Activated T-helper 2 cell treated with anti-CD3 and anti-CD28 coated beads, Interferon-gamma antibody, Interleukin-2, Interleukin-4, amounts not matched to agents 10 μg/mL and 5 μg/mL and 100 μg/mL, durations not matched to agents 14 hours and 24 hours and 36 hours (primary cell): ENCODE measurements at regions of chr13 and their contacts with region 1.

Region 1: DNA sequence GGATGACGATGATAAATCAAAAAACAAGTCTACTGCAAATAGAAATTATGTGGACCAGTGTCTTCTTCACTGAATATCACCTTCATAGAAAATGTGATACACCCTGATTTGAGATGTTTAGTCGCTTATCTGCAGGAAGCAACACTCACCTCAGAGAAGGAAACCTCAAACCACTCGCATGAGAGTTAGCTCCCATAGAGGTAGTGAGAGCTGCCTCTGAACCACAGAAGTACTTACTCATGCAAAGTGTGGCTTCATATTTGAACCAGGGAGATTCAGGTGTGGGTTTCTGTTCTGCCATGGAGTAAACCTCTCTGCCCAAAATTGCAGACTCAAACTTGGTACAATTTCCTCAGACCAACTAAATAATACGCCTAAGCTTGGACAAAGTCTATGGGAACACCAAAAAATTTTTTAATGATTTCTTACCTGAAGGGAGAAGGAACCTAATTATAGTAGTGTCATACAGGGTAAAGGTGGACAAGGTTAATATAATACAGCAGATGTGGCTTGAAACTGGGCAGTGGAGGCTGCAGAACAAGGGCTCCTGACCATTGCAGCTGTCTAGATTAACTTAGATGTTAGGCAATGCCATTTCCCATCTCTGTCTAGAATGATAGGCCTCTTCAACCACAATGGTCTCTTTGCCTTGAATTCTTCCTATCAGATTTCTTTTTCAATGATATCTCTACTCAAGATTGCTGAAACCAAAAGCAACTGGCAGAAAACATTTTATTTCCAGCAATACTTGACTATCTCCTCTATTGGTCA is 29.6 kb upstream of the RCBTB2 start:
- DNase-seq: peak; percentile 78
- H3K4me3 Mint-ChIP-seq: peak overlapping the region; percentile 46
- H3K27ac Mint-ChIP-seq: peak overlapping the region; percentile 36
- H3K4me1 Mint-ChIP-seq: peaks cover 57% of the 10 kb centered on the region
- H3K27me3 Mint-ChIP-seq: peaks cover 46% of the 10 kb centered on the region

Region 2: GRCh38 chr13:48346583-48346982 is 215.9 kb before region 1 on chr13:
- intact Hi-C with region 1: loop called (anchors 2 kb)
- DNase-seq: no peak
- H3K4me3 Mint-ChIP-seq: no peak overlapping the region
- H3K27ac Mint-ChIP-seq: no peak overlapping the region
- H3K4me1 Mint-ChIP-seq: peaks cover 11% of the 10 kb centered on the region
- H3K27me3 Mint-ChIP-seq: no peaks in the 10 kb centered on the region

Region 3: DNA sequence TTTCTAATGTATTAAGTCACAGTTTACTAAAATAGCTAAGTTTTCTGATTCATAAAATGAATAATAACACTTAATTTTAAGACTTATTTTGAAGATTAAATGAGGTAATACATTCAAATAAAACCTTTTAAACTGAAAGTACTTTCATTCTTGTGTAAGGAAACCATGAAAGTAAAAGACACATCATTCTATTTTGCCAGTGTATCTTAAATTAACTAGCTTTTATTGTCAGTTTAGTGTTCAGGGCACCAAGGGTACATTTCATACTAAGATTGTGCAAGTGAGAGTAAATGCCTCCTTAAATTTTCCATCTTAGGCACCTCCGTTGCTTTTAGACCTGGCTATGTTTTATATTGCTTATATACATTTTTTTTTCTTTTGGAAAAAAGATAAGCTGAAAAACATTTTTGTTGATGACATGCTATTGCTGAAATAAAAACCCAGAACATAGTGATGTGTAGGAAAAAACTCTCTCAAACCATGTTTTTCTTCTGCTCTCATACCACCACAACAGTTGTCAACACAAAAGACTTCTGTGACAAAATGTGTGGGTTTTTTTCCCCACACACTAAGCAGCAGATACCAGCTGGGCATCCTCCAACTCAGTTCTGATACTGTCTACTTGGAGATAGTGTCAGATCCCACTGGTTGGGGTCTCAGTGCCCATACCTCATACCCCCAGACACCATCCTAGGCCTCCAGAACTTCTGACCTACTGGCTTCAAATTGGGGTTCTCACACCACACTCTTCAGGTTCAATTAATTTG is 118.9 kb before region 1 on chr13:
- intact Hi-C with region 1: loop called (anchors 1 kb)
- DNase-seq: no peak
- H3K4me3 Mint-ChIP-seq: no peak overlapping the region
- H3K27ac Mint-ChIP-seq: peak overlapping the region; percentile 29
- H3K4me1 Mint-ChIP-seq: peaks cover 17% of the 10 kb centered on the region
- H3K27me3 Mint-ChIP-seq: no peaks in the 10 kb centered on the region

Region 4: DNA sequence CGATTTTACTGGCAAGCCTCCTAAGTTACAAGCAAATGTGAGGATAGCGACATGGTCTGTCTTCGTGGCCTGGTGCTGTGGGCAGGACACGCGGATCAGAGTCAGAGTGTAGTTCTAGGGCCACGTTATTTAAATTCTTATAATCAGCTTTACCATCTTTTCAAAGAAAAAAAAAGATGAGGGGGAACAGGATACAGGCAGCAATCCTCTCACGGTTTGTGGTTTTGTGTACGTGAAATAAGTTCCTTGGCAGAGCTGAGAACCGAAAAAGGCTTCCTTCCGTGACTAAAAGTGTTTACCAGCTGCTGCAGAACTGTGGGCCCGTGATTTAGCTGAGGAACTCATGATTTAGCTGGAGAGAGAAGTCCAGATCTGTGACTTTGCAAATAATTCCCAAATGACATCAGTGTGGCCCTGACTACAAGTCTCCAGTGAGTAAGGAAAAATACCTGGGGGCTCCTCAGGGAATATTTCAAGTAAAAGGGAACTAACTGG is 56.8 kb before region 1 on chr13:
- intact Hi-C with region 1: loop called (anchors 1 kb)
- DNase-seq: peak; percentile 64
- H3K4me3 Mint-ChIP-seq: peak overlapping the region; percentile 30
- H3K27ac Mint-ChIP-seq: peak overlapping the region; percentile 73
- H3K4me1 Mint-ChIP-seq: peaks cover 75% of the 10 kb centered on the region
- H3K27me3 Mint-ChIP-seq: peaks cover 4% of the 10 kb centered on the region

Region 5: GRCh38 chr13:48532506-48533499 is 29.7 kb before region 1 on chr13 and contains the start of gene RCBTB2:
- intact Hi-C with region 1: loop called (anchors 2 kb)
- DNase-seq: peak; percentile 99
- H3K4me3 Mint-ChIP-seq: peak within 1 kb of the TSS; percentile 90
- H3K27ac Mint-ChIP-seq: peak within 1 kb of the TSS; percentile 89
- H3K4me1 Mint-ChIP-seq: peaks cover 28% of the 10 kb centered on the region
- H3K27me3 Mint-ChIP-seq: peaks cover 2% of the 10 kb centered on the region
- total RNA-seq, gene RCBTB2: 2.7 and 3.4 TPM in 2 replicates

Region 6: GRCh38 chr13:50026788-50027473 is 1464.5 kb after region 1 on chr13:
- intact Hi-C with region 1: no loop called
- DNase-seq: no peak
- H3K4me3 Mint-ChIP-seq: no peak overlapping the region
- H3K27ac Mint-ChIP-seq: no peak overlapping the region
- H3K4me1 Mint-ChIP-seq: peaks cover 10% of the 10 kb centered on the region
- H3K27me3 Mint-ChIP-seq: no peaks in the 10 kb centered on the region